CD14-positive monocyte (primary cell): ENCODE measurements at regions of chr12 and their contacts with region 1.

Region 1: DNA sequence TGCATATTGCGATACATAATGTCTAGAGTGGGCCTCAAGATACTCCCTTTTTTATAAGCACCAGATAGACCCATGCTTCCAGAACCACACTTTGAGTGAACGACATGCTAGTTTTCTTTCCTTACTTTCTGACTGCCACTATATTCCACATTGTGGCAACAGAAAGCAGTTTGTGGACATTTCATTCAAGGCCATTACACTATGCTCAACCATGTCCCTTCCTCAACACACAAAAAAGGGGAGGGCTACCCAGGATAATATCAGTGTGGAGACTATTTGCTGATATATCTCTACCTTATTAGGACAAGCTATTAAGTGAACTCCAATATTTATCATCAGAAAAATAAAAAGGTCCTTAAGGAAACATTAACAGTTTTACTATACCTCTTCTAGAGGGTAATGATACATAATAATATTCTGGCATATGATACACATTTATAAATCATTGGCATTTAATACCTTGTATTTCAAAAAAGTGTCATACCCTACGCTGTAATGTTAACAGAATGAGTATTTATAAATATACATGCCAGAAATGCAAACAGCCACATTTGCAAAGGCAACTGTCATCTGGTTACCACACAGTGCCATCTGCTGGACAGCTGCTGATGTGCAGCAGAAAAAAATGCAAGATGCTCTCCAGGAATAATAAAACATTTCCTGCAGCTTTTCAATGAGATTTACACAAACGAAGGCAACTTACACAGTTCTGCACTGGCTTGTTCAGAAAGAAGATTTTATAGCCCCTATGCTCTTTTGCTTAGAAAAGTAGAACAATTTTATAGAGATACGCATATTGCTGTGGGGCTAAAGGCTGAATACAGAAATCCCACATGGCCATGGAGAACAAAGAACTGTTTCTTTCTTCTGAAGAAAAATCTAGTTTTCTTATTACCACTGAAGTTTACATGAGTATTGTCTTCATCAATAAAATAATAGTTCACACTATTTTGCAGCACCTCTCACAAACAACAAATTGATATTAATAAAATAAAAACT is 182.2 kb upstream of the GRIP1 start:
- DNase-seq: peak; percentile 23 to 44 (median 35)
- H3K4me3 ChIP-seq: no peak overlapping the region
- H3K4me3 Mint-ChIP-seq: no peak overlapping the region
- H3K27ac ChIP-seq: no peak overlapping the region
- H3K27ac Mint-ChIP-seq: no peak overlapping the region
- H3K4me1 ChIP-seq: no peaks in the 10 kb centered on the region
- H3K4me1 Mint-ChIP-seq: no peaks in the 10 kb centered on the region
- H3K27me3 ChIP-seq: no peaks in the 10 kb centered on the region
- H3K27me3 Mint-ChIP-seq: peaks cover 0 to 2% (median 0%) of the 10 kb centered on the region in 3 donors
- CTCF ChIP-seq: peak; percentile 93

Region 2: DNA sequence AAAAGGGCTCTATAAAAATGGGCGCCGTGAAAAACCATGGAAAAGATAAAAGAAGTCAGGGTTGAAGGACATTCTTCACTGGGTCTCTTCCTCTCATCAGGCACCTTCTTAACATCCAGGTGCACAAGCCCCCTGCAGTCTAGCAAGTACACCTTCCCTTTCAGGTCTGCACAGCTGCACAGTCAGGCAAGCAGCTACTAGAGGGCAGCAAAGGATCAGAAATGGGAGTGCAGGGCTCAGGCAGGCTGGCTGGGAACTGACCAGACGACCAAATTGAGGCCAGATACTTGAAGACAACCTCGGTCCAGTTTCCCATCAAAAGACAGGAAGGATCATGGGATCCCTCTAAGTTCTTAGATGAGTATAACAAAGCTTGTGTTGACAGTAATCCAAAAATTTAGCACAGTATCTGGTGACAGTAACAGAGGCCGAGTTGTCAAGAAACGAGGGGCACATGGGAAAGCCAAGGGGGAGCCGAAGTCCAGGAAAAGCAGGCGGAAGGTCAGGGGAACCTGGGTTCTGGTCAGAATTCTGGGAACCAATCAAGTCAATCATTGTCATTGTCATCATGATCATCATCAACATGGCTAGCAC is 172.1 kb before region 1 on chr12:
- intact Hi-C with region 1: loop called in 1 of 2 experiments (anchors 5 kb)
- DNase-seq: peak; percentile 29 to 52 (median 43)
- H3K4me3 ChIP-seq: no peak overlapping the region
- H3K4me3 Mint-ChIP-seq: no peak overlapping the region
- H3K27ac ChIP-seq: no peak overlapping the region
- H3K27ac Mint-ChIP-seq: peak overlapping the region in 1 of 7 donors; percentile 43
- H3K4me1 ChIP-seq: peaks cover 23 to 30% of the 10 kb centered on the region in 2 donors
- H3K4me1 Mint-ChIP-seq: peaks cover 35% of the 10 kb centered on the region
- H3K27me3 ChIP-seq: no peaks in the 10 kb centered on the region
- H3K27me3 Mint-ChIP-seq: peaks cover 0 to 3% (median 0%) of the 10 kb centered on the region in 3 donors
- CTCF ChIP-seq: peak; percentile 66

Region 3: DNA sequence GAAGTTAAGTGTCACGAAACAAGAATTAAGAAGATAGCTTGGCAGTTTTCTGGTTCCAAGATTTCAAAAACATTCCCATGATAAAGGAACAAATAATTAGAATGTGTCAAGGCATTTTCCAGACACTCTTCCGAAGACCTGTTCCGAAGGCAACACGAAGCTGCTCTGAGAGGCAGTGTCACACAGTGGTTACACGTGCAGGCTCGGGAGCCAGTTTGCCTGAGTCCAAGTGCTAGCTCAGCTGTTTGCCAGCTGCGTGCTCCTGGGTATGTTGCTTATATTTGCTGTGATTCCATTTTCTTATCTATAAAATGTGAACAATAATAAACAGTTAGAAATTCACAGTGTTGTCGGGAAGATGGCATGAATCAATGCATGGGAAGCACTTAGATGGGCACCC is 35.7 kb after region 1 on chr12:
- intact Hi-C with region 1: no loop called
- DNase-seq: no peak
- H3K4me3 ChIP-seq: no peak overlapping the region
- H3K4me3 Mint-ChIP-seq: no peak overlapping the region
- H3K27ac ChIP-seq: no peak overlapping the region
- H3K27ac Mint-ChIP-seq: no peak overlapping the region
- H3K4me1 ChIP-seq: peaks cover 11 to 16% of the 10 kb centered on the region in 2 donors
- H3K4me1 Mint-ChIP-seq: peaks cover 23% of the 10 kb centered on the region
- H3K27me3 ChIP-seq: no peaks in the 10 kb centered on the region
- H3K27me3 Mint-ChIP-seq: no peaks in the 10 kb centered on the region
- CTCF ChIP-seq: no peak